CD4-positive, alpha-beta memory T cell (primary cell): ENCODE measurements at regions of chr6 and their contacts with region 1.

Region 1: GRCh38 chr6:166488076-166488685 is 98.3 kb downstream of the RAMACL start:
- DNase-seq: peak; percentile 79 to 92 (median 85)
- H3K4me3 ChIP-seq: peak overlapping the region in 1 of 2 donors; percentile 39
- H3K4me3 Mint-ChIP-seq: peak overlapping the region; percentile 69 to 89 (median 82)
- H3K27ac ChIP-seq: peak overlapping the region; percentile 61
- H3K27ac Mint-ChIP-seq: peak overlapping the region; percentile 83 to 99 (median 92)
- H3K4me1 ChIP-seq: peaks cover 24% of the 10 kb centered on the region
- H3K4me1 Mint-ChIP-seq: peaks cover 17 to 37% (median 30%) of the 10 kb centered on the region in 4 donors
- H3K27me3 ChIP-seq: no peaks in the 10 kb centered on the region
- H3K27me3 Mint-ChIP-seq: no peaks in the 10 kb centered on the region

Region 2: GRCh38 chr6:166237617-166238016 is 250.6 kb before region 1 on chr6:
- CTCF ChIA-PET with region 1: no interaction called
- POLR2A ChIA-PET with region 1: no interaction called
- intact Hi-C with region 1: no loop called
- DNase-seq: no peak
- H3K4me3 ChIP-seq: no peak overlapping the region
- H3K4me3 Mint-ChIP-seq: no peak overlapping the region
- H3K27ac ChIP-seq: no peak overlapping the region
- H3K27ac Mint-ChIP-seq: no peak overlapping the region
- H3K4me1 ChIP-seq: peaks cover 3% of the 10 kb centered on the region
- H3K4me1 Mint-ChIP-seq: peaks cover 0 to 9% (median 9%) of the 10 kb centered on the region in 4 donors
- H3K27me3 ChIP-seq: no peaks in the 10 kb centered on the region
- H3K27me3 Mint-ChIP-seq: peaks cover 10 to 15% of the 10 kb centered on the region in 2 donors

Region 3: DNA sequence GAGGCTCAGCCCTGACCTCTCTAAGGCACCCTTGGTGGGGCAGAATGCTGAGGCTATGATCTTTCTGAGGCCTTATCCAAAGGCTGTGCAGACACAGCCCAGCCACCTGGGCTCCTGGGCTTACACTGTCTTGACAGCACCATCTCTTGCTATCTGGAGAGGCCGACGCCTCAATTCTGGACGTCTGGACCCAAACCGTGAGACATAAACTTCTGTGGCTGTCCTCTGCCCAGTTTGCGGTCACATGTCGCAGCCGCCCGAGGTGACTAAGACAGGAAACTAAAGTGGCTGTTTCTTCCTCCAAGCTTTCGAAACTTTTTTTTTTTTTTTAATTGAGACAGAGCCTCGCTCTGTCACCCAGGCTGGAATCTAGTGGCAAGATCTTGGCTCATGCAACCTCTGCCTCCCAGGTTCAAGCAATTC is 229.3 kb before region 1 on chr6:
- CTCF ChIA-PET with region 1: no interaction called
- POLR2A ChIA-PET with region 1: interaction called, 15 read pairs
- intact Hi-C with region 1: no loop called
- DNase-seq: peak in 1 of 5 donors; percentile 68
- H3K4me3 ChIP-seq: no peak overlapping the region
- H3K4me3 Mint-ChIP-seq: peak overlapping the region in 6 of 8 donors; percentile 75 to 87 (median 82)
- H3K27ac ChIP-seq: no peak overlapping the region
- H3K27ac Mint-ChIP-seq: peak overlapping the region in 6 of 7 donors; percentile 36 to 96 (median 92)
- H3K4me1 ChIP-seq: peaks cover 32% of the 10 kb centered on the region
- H3K4me1 Mint-ChIP-seq: peaks cover 4 to 48% (median 34%) of the 10 kb centered on the region in 4 donors
- H3K27me3 ChIP-seq: peaks cover under 1% of the 10 kb centered on the region
- H3K27me3 Mint-ChIP-seq: peaks cover 6 to 8% of the 10 kb centered on the region in 2 donors

Region 4: GRCh38 chr6:166411721-166412151 is 76.4 kb before region 1 on chr6:
- CTCF ChIA-PET with region 1: interaction called, 9 read pairs
- POLR2A ChIA-PET with region 1: interaction called, 10 read pairs
- intact Hi-C with region 1: no loop called
- DNase-seq: peak; percentile 47 to 57 (median 55)
- H3K4me3 ChIP-seq: peak overlapping the region in 1 of 2 donors; percentile 19
- H3K4me3 Mint-ChIP-seq: peak overlapping the region; percentile 80 to 93 (median 86)
- H3K27ac ChIP-seq: peak overlapping the region; percentile 38
- H3K27ac Mint-ChIP-seq: peak overlapping the region; percentile 88 to 96 (median 91)
- H3K4me1 ChIP-seq: peaks cover 67% of the 10 kb centered on the region
- H3K4me1 Mint-ChIP-seq: peaks cover 50 to 80% (median 64%) of the 10 kb centered on the region in 4 donors
- H3K27me3 ChIP-seq: no peaks in the 10 kb centered on the region
- H3K27me3 Mint-ChIP-seq: no peaks in the 10 kb centered on the region

Region 5: GRCh38 chr6:166419286-166419685 is 68.9 kb before region 1 on chr6:
- CTCF ChIA-PET with region 1: interaction called, 3 read pairs
- POLR2A ChIA-PET with region 1: interaction called, 28 read pairs
- intact Hi-C with region 1: loop called (anchors 1 kb)
- DNase-seq: peak; percentile 45 to 82 (median 53)
- H3K4me3 ChIP-seq: no peak overlapping the region
- H3K4me3 Mint-ChIP-seq: peak overlapping the region in 7 of 8 donors; percentile 55 to 79 (median 70)
- H3K27ac ChIP-seq: peak overlapping the region; percentile 42
- H3K27ac Mint-ChIP-seq: peak overlapping the region; percentile 96 to 99 (median 98)
- H3K4me1 ChIP-seq: peaks cover 74% of the 10 kb centered on the region
- H3K4me1 Mint-ChIP-seq: peaks cover 55 to 74% (median 68%) of the 10 kb centered on the region in 4 donors
- H3K27me3 ChIP-seq: no peaks in the 10 kb centered on the region
- H3K27me3 Mint-ChIP-seq: peaks cover 0 to 4% of the 10 kb centered on the region in 2 donors

Region 6: GRCh38 chr6:166512567-166512966 is 24.4 kb after region 1 on chr6:
- CTCF ChIA-PET with region 1: interaction called, 17 read pairs
- POLR2A ChIA-PET with region 1: interaction called, 5 read pairs
- intact Hi-C with region 1: no loop called
- DNase-seq: peak; percentile 25 to 52 (median 47)
- H3K4me3 ChIP-seq: no peak overlapping the region
- H3K4me3 Mint-ChIP-seq: peak overlapping the region in 1 of 8 donors; percentile 47
- H3K27ac ChIP-seq: no peak overlapping the region
- H3K27ac Mint-ChIP-seq: peak overlapping the region in 5 of 7 donors; percentile 8 to 74 (median 25)
- H3K4me1 ChIP-seq: peaks cover 8% of the 10 kb centered on the region
- H3K4me1 Mint-ChIP-seq: peaks cover 7 to 13% (median 8%) of the 10 kb centered on the region in 4 donors
- H3K27me3 ChIP-seq: no peaks in the 10 kb centered on the region
- H3K27me3 Mint-ChIP-seq: no peaks in the 10 kb centered on the region

Region 7: DNA sequence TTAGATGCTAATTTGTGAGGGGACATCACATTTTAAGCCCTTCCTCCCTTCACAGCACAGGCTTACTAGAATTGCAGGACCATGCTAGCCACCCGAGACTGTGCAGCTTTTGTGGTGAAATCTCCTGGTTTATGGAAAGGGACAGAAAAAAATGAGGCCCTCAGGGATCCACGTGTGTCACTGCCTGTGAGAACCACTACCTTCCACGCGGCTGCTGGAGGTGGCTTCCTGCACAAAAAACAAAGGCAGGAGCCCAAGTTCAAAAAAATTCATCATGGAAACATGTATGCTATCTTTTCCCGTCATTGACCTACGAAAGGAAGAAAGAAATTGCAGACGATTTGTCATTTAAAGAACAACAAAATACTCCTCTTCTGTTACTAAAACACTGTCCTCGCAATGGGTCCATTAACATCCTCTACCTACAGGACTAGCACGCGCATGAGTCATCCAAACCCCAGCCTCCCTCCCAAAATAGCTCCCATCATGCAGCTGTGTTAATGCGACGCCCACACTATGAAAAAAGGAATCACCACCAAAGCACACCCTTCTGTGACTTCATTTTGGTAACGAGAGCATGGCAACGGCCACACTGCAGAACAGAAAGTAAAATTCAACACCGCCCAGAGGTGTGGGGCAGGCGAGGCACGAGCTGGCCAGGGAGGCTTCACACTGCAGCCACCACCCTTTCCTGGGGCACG is 52.6 kb after region 1 on chr6:
- CTCF ChIA-PET with region 1: interaction called, 3 read pairs
- POLR2A ChIA-PET with region 1: interaction called, 8 read pairs
- intact Hi-C with region 1: loop called (anchors 5 kb)
- DNase-seq: peak; percentile 64 to 88 (median 70)
- H3K4me3 ChIP-seq: peak overlapping the region in 1 of 2 donors; percentile 51
- H3K4me3 Mint-ChIP-seq: peak overlapping the region; percentile 72 to 92 (median 88)
- H3K27ac ChIP-seq: peak overlapping the region; percentile 66
- H3K27ac Mint-ChIP-seq: peak overlapping the region; percentile 81 to 97 (median 91)
- H3K4me1 ChIP-seq: peaks cover 24% of the 10 kb centered on the region
- H3K4me1 Mint-ChIP-seq: peaks cover 18 to 38% (median 28%) of the 10 kb centered on the region in 4 donors
- H3K27me3 ChIP-seq: no peaks in the 10 kb centered on the region
- H3K27me3 Mint-ChIP-seq: no peaks in the 10 kb centered on the region

Region 8: GRCh38 chr6:166567107-166567506 is 78.9 kb after region 1 on chr6:
- CTCF ChIA-PET with region 1: no interaction called
- POLR2A ChIA-PET with region 1: no interaction called
- intact Hi-C with region 1: no loop called
- DNase-seq: no peak
- H3K4me3 ChIP-seq: no peak overlapping the region
- H3K4me3 Mint-ChIP-seq: no peak overlapping the region
- H3K27ac ChIP-seq: no peak overlapping the region
- H3K27ac Mint-ChIP-seq: no peak overlapping the region
- H3K4me1 ChIP-seq: no peaks in the 10 kb centered on the region
- H3K4me1 Mint-ChIP-seq: no peaks in the 10 kb centered on the region
- H3K27me3 ChIP-seq: no peaks in the 10 kb centered on the region
- H3K27me3 Mint-ChIP-seq: peaks cover 1 to 3% of the 10 kb centered on the region in 2 donors